Transverse colon (tissue), 4 donors: ENCODE measurements at regions of chr9 and their contacts with region 1.

Region 1: DNA sequence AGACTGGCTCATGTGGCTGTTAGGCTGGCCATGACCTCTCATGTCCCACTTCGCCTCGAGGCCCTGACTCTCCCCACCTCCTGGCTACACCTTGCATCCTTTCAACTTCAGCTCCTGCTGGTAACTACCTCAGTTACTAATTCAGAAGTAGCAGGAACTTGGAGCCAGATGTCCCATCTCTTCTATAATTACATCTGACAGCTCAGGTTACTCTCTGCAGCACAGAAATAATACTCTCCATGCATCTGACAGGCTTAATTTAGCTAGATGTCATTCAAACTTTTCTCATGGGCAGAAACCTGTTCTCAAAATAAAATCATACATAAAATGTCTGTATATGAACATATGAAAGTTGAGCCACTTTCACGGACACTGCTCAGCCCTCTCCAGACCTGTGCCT is 92.2 kb upstream of the IL33 start:
- DNase-seq: no peak
- H3K4me3 ChIP-seq: no peak overlapping the region
- H3K27ac ChIP-seq: no peak overlapping the region
- H3K4me1 ChIP-seq: no peaks in the 10 kb centered on the region
- H3K27me3 ChIP-seq: no peaks in the 10 kb centered on the region
- CTCF ChIP-seq: no peak
- EP300 ChIP-seq: no peak
- POLR2A ChIP-seq: no peak

Region 2: DNA sequence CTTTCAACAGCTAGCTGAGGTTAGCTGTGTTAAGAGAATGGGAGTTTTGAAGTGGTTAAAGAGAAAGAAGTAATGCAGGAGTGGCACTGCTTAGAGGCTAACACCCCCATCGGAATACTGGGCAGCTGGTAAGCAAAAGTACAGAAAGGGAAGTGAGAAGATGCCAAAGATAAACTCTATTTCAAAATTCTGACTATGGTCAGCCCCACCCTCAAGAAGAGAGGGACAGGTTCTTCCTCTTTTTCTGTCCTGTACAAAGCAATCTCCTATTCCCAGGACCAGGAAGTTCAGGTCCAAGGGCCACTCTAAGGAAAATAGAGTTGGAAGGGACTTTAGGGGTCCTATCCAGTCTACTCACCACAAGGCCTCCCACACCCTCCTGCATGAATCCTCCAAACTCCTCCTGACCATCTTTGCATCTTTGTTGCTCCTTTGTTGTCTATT is 1184.3 kb before region 1 on chr9:
- in situ Hi-C with region 1: no loop called
- intact Hi-C with region 1: no loop called
- DNase-seq: no peak
- H3K4me3 ChIP-seq: no peak overlapping the region
- H3K27ac ChIP-seq: peak overlapping the region in 1 of 4 donors; percentile 8
- H3K4me1 ChIP-seq: peaks cover 0 to 20% (median 0%) of the 10 kb centered on the region in 4 donors
- H3K27me3 ChIP-seq: no peaks in the 10 kb centered on the region
- CTCF ChIP-seq: no peak
- EP300 ChIP-seq: no peak
- POLR2A ChIP-seq: no peak

Region 3: DNA sequence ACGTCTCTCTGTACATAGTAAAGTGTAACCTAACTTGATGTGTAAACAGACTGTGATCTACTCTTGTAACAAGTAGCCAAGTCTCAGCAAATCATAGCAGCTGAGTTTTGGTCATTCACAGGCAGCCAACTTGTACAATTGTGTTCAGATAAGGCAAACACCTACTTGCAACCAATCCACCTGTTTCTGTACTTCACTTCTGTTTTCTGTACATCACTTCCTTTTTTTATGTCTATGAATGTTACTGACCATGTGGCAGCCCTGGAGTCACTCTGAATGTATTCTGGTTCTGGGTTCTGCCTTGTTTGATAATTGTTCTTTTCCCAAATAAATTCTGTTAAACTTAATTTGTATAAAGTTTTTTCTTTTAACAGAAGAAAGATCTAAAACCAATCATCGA is 844.9 kb before region 1 on chr9:
- in situ Hi-C with region 1: no loop called
- intact Hi-C with region 1: loop called (anchors 5 kb)
- DNase-seq: no peak
- H3K4me3 ChIP-seq: no peak overlapping the region
- H3K27ac ChIP-seq: no peak overlapping the region
- H3K4me1 ChIP-seq: no peaks in the 10 kb centered on the region
- H3K27me3 ChIP-seq: no peaks in the 10 kb centered on the region
- CTCF ChIP-seq: no peak
- EP300 ChIP-seq: no peak
- POLR2A ChIP-seq: no peak